Adrenal gland (tissue), 19 donors: ENCODE measurements at regions of chr19 and their contacts with region 1.

Region 1: GRCh38 chr19:35269421-35270117 is 807 bp downstream of the USF2 start:
- DNase-seq: peak; percentile 89 to 95 (median 91)
- H3K4me3 ChIP-seq: peak overlapping the region in 1 of 4 donors; percentile 81
- H3K27ac ChIP-seq: peak overlapping the region in 4 of 5 donors; percentile 61 to 99 (median 84)
- H3K4me1 ChIP-seq: peaks cover 14 to 37% of the 10 kb centered on the region in 2 donors
- H3K27me3 ChIP-seq: no peaks in the 10 kb centered on the region
- CTCF ChIP-seq: peak in 5 of 6 experiments; percentile 25 to 86 (median 75)
- POLR2A ChIP-seq: peak in 1 of 2 donors; percentile 38

Region 2: DNA sequence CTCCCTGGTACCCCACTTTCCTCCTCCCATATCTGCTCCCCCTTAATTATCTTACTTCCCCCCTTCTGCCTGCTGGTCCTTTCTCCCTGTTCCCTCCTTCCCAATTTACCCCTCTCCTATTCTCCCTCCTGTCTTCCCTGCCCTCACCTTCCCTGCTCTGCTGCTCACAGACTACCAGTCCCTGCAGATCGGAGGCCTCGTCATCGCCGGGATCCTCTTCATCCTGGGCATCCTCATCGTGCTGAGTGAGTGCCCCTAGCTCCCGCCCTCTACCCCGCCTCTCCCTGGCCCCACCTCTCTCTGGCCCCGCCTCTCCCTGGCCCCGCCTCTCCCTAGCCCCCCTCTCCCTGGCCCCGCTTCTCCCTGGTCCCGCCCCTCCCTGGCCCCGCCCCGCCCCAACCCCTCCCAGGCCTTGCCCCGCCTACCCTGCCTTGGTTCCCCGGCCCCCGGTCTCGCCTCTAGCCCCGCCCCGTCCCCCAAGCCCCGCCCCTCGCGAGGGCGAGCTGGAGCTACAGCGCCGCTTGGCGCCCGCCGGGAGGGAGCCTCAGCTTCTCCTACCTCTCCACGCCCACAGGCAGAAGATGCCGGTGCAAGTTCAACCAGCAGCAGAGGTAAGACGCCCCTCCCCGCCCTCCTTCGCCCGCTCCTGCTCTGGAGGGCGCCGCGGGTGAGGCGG is 128.5 kb before region 1 on chr19:
- intact Hi-C with region 1: loop called in 1 of 2 experiments (anchors 5 kb)
- DNase-seq: peak; percentile 91 to 96 (median 94)
- H3K4me3 ChIP-seq: no peak overlapping the region
- H3K27ac ChIP-seq: peak overlapping the region in 1 of 5 donors; percentile 87
- H3K4me1 ChIP-seq: peaks cover 0 to 15% of the 10 kb centered on the region in 2 donors
- H3K27me3 ChIP-seq: peaks cover 4% of the 10 kb centered on the region
- CTCF ChIP-seq: peak in 5 of 6 experiments; percentile 16 to 42 (median 36)
- POLR2A ChIP-seq: no peak

Region 3: GRCh38 chr19:35468637-35469036 is 199.1 kb after region 1 on chr19:
- intact Hi-C with region 1: loop called in 1 of 2 experiments (anchors 10 kb)
- DNase-seq: peak; percentile 53 to 81 (median 66)
- H3K4me3 ChIP-seq: no peak overlapping the region
- H3K27ac ChIP-seq: no peak overlapping the region
- H3K4me1 ChIP-seq: no peaks in the 10 kb centered on the region
- H3K27me3 ChIP-seq: no peaks in the 10 kb centered on the region
- CTCF ChIP-seq: peak; percentile 60 to 84 (median 75)
- POLR2A ChIP-seq: no peak